Activated B cell treated with CpG ODN at 0.5 μM for 24 hours (primary cell): ENCODE measurements at regions of chr5 and their contacts with region 1.

Region 1: DNA sequence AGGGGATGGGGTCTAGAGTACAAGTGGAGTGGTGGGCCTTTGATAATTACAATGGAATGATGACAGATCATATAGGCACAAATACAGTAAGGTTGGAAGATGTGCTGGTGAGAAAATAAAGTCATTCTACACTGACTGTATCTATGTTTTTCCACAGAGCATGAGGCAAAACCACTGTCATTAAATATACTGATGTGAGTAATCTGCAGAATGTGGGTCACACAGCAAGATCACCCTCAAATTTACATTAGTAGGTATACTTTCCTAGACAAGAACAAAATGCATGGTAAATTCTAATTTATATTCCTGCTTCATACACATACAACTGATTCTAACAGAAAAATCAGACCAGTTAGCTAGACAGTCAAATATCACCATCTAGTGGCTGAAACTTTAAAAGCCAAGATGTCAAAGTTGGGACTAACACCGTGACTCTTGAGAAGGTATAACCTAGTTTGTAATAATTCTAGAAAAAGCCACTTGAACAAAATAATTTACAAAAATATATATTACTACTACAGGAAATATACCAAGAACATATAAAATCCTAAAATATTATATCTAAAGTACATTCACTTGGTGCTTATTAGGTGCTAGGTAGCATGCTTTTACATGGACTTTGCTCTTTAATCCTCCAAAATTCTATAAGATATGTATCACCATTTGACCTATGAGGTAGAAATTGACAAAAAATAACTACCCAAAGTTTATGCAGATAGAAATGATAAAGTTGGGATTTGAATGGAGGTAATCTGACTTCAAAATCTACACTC is 19.5 kb downstream of the TTC33 start:
- DNase-seq: no peak
- ATAC-seq: peak; percentile 42
- H3K4me3 Mint-ChIP-seq: no peak overlapping the region
- H3K27ac Mint-ChIP-seq: no peak overlapping the region
- H3K4me1 Mint-ChIP-seq: no peaks in the 10 kb centered on the region
- H3K27me3 Mint-ChIP-seq: no peaks in the 10 kb centered on the region
- CTCF ChIP-seq: no peak

Region 2: GRCh38 chr5:39578887-39579497 is 1157.3 kb before region 1 on chr5:
- CTCF ChIA-PET with region 1: interaction called, 11 read pairs
- POLR2A ChIA-PET with region 1: no interaction called
- intact Hi-C with region 1: loop called (anchors 1 kb)
- DNase-seq: no peak
- ATAC-seq: no peak
- H3K4me3 Mint-ChIP-seq: no peak overlapping the region
- H3K27ac Mint-ChIP-seq: no peak overlapping the region
- H3K4me1 Mint-ChIP-seq: peaks cover 8% of the 10 kb centered on the region
- H3K27me3 Mint-ChIP-seq: peaks cover 2% of the 10 kb centered on the region
- CTCF ChIP-seq: peak; percentile 63

Region 3: GRCh38 chr5:39599721-39600431 is 1136.4 kb before region 1 on chr5:
- CTCF ChIA-PET with region 1: interaction called, 4 read pairs
- POLR2A ChIA-PET with region 1: no interaction called
- intact Hi-C with region 1: loop called (anchors 1 kb)
- DNase-seq: no peak
- ATAC-seq: no peak
- H3K4me3 Mint-ChIP-seq: no peak overlapping the region
- H3K27ac Mint-ChIP-seq: no peak overlapping the region
- H3K4me1 Mint-ChIP-seq: no peaks in the 10 kb centered on the region
- H3K27me3 Mint-ChIP-seq: peaks cover 18% of the 10 kb centered on the region
- CTCF ChIP-seq: no peak

Region 4: GRCh38 chr5:39714036-39714698 is 1022.1 kb before region 1 on chr5:
- CTCF ChIA-PET with region 1: interaction called, 32 read pairs
- POLR2A ChIA-PET with region 1: no interaction called
- intact Hi-C with region 1: loop called (anchors 1 kb)
- DNase-seq: no peak
- ATAC-seq: peak; percentile 45
- H3K4me3 Mint-ChIP-seq: no peak overlapping the region
- H3K27ac Mint-ChIP-seq: no peak overlapping the region
- H3K4me1 Mint-ChIP-seq: no peaks in the 10 kb centered on the region
- H3K27me3 Mint-ChIP-seq: no peaks in the 10 kb centered on the region
- CTCF ChIP-seq: no peak

Region 5: DNA sequence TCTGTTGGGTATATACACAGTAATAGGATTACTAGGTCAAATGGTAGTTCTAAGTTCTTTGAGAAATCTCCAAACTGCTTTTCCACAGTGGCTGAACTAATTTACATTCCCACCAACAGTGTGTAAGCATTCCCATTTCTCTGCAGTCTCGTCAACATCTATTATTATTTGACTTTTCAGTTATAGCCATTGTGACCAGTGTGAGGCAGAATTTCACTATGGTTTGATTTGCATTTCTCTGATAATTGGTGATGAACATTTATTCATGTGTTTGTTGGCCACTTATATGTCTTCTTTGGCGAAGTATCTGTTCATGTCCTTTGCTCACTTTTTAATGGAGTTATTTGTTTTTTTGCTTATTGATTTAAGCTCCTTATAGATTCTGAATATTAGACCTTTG is 715.3 kb before region 1 on chr5:
- CTCF ChIA-PET with region 1: no interaction called
- POLR2A ChIA-PET with region 1: no interaction called
- intact Hi-C with region 1: loop called (anchors 1 kb)
- DNase-seq: no peak
- ATAC-seq: no peak
- H3K4me3 Mint-ChIP-seq: no peak overlapping the region
- H3K27ac Mint-ChIP-seq: no peak overlapping the region
- H3K4me1 Mint-ChIP-seq: peaks cover 27% of the 10 kb centered on the region
- H3K27me3 Mint-ChIP-seq: no peaks in the 10 kb centered on the region
- CTCF ChIP-seq: no peak

Region 6: DNA sequence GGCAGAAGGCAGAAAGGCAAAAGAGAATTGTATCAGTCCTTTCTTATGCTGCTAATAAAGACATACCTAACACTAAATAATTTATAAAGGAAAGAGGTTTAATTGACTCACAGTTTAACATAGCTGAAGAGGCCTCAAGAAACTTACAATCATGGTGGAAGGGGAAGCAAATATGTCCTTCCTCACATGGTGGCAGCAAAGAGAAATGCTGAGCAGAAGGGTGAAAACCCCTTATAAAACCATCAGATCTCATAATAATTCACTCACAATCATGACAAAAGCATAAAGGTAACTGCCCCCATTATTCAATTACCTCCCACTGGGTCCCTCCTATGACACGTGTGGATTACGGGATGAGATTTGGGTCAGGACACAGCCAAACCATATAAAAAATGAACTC is 369.0 kb before region 1 on chr5:
- CTCF ChIA-PET with region 1: no interaction called
- POLR2A ChIA-PET with region 1: no interaction called
- intact Hi-C with region 1: loop called (anchors 1 kb)
- DNase-seq: no peak
- ATAC-seq: peak; percentile 45
- H3K4me3 Mint-ChIP-seq: no peak overlapping the region
- H3K27ac Mint-ChIP-seq: no peak overlapping the region
- H3K4me1 Mint-ChIP-seq: peaks cover 13% of the 10 kb centered on the region
- H3K27me3 Mint-ChIP-seq: no peaks in the 10 kb centered on the region
- CTCF ChIP-seq: no peak

Region 7: DNA sequence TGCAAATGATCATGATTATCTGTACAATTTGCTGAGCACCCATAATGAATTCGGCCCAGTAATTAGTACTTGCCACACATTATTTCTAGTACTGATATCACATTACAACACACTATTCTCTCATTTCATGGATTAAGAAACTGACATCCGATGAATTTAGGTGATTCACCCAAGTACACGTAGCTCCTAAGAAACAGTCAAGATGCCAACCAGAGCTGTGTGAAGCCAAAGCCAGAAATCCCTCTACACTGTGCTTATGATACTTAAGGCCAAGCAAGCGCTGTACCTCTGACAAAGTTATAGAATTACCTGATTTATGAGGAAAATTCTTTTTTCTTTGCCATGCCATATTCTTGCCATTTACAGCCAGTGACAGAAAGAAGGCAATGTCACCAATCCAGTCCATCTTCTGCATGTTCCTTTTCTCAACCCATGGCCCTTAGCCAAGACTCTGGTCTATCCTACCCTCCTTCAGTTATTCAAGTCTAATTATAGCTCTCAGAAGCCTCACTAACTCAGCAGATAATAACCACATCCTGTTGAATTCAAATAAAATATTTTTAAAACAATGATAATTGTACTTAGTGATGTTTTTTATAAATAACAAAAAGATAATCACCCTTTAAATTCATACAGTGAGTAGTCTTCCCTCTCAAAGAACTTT is 130.9 kb before region 1 on chr5:
- CTCF ChIA-PET with region 1: no interaction called
- POLR2A ChIA-PET with region 1: no interaction called
- intact Hi-C with region 1: no loop called
- DNase-seq: no peak
- ATAC-seq: no peak
- H3K4me3 Mint-ChIP-seq: peak overlapping the region; percentile 63
- H3K27ac Mint-ChIP-seq: peak overlapping the region; percentile 50
- H3K4me1 Mint-ChIP-seq: peaks cover 56% of the 10 kb centered on the region
- H3K27me3 Mint-ChIP-seq: no peaks in the 10 kb centered on the region
- CTCF ChIP-seq: no peak

Region 8: DNA sequence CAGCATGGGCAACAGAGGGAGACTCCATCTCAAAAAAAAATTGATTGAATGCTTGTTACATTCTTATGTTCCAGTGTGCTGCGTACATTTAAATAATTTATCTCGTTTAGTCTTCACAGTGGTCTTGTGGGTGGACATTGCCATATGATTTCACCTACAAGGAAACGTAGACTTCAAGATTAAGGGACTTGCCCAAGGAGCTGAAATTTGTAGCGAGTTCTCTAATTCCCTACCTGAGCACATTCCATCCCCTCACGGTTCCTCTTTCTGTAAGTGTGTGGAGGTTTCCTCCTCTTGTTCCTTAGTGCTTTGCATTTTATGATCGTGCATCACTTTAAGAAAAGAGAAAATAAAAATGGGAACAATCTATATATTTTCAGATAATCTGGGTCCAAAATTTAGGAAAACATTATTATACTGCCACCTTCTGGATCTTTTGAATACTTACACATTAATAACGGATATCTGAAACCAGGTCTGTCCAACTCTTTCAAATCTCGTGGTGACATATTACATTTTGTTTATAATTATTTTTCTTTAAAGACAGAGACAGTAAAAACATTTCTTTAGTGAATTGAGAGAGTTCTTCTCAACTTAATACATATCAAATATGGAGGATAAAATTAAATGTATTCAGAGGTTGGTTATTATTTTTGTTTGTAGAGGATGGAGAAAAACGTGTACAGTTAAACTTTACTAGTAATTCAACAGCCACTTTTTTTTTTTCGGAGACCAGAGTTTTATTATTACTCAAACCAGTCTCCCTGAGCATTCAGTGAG is 143.1 kb after region 1 on chr5:
- CTCF ChIA-PET with region 1: no interaction called
- POLR2A ChIA-PET with region 1: no interaction called
- intact Hi-C with region 1: loop called (anchors 2 kb)
- DNase-seq: no peak
- ATAC-seq: peak; percentile 28
- H3K4me3 Mint-ChIP-seq: no peak overlapping the region
- H3K27ac Mint-ChIP-seq: no peak overlapping the region
- H3K4me1 Mint-ChIP-seq: no peaks in the 10 kb centered on the region
- H3K27me3 Mint-ChIP-seq: no peaks in the 10 kb centered on the region
- CTCF ChIP-seq: peak; percentile 20